CD14-positive monocyte (primary cell): ENCODE measurements at regions of chr19 and their contacts with region 1.

Region 1: DNA sequence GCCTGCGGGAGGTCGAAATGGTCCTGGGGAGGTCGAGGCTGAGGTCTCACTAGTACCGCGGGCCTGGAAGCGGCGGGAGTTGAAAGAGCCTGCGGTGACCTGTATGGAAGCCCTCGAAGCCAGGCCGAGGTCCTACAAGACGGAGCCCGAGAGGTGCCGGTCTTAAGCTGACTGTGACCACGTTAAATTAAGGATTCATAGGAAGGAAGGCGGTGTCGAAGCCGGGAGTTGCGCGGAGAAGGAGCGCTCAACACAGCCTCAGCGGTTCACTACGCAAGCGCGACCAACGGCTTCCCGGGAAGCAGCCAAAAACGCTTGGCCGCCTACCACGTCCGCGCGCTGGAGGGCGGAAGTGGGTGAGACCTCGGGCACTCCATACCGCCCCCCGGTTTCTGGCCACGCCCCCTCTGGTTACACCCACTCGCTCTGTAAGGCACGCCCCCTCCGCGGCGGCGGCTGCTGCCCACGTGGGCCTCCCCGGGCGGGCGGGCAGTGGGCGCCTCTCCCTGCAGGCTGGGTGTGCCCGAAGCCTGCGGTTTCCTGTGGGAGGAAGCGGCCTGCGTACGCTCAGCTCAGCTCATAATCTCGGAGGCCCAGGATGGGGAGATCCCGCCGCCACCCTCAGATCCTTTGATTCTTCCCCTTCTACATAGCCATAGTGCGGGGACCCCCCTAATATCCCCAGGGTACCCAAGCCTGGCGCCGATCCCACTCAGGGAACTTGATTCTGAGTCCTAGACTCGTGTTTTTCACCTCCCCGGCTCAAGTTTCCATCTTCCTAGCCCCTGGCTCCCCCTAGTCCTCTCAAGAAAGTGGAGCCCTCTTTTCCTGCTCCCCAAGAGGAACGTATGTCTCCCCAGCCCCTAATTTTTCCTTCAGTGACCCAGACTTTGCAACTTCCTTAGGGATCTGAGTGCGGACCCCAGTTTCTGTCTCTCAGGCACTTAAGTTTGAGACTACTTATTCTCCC is 3.4 kb upstream of the EMP3 start:
- DNase-seq: peak; percentile 98 to 99 (median 99)
- H3K4me3 ChIP-seq: peak overlapping the region; percentile 59 to 89 (median 75)
- H3K4me3 Mint-ChIP-seq: peak overlapping the region; percentile 89 to 93
- H3K27ac ChIP-seq: peak overlapping the region; percentile 94 to 99
- H3K27ac Mint-ChIP-seq: peak overlapping the region; percentile 99 to 100 (median 99)
- H3K4me1 ChIP-seq: peaks cover 53 to 60% of the 10 kb centered on the region in 2 donors
- H3K4me1 Mint-ChIP-seq: peaks cover 53% of the 10 kb centered on the region
- H3K27me3 ChIP-seq: no peaks in the 10 kb centered on the region
- H3K27me3 Mint-ChIP-seq: peaks cover 0 to 3% (median 2%) of the 10 kb centered on the region in 3 donors
- CTCF ChIP-seq: no peak

Region 2: GRCh38 chr19:48255376-48256303 is 66.3 kb before region 1 on chr19 and contains the start of gene CARD8:
- intact Hi-C with region 1: loop called in 1 of 2 experiments (anchors 5 kb)
- DNase-seq: peak; percentile 89 to 93 (median 90)
- H3K4me3 ChIP-seq: peak within 1 kb of the TSS; percentile 52 to 100 (median 93)
- H3K4me3 Mint-ChIP-seq: peak within 1 kb of the TSS; percentile 90 to 95
- H3K27ac ChIP-seq: peak within 1 kb of the TSS; percentile 86 to 99
- H3K27ac Mint-ChIP-seq: peak within 1 kb of the TSS; percentile 99 to 100 (median 100)
- H3K4me1 ChIP-seq: peaks cover 46 to 60% of the 10 kb centered on the region in 2 donors
- H3K4me1 Mint-ChIP-seq: peaks cover 64% of the 10 kb centered on the region
- H3K27me3 ChIP-seq: no peaks in the 10 kb centered on the region
- H3K27me3 Mint-ChIP-seq: peaks cover 0 to 3% (median 0%) of the 10 kb centered on the region in 3 donors
- CTCF ChIP-seq: no peak
- polyA plus RNA-seq, gene CARD8: 76.4 to 122 (median 90.9) TPM

Region 3: DNA sequence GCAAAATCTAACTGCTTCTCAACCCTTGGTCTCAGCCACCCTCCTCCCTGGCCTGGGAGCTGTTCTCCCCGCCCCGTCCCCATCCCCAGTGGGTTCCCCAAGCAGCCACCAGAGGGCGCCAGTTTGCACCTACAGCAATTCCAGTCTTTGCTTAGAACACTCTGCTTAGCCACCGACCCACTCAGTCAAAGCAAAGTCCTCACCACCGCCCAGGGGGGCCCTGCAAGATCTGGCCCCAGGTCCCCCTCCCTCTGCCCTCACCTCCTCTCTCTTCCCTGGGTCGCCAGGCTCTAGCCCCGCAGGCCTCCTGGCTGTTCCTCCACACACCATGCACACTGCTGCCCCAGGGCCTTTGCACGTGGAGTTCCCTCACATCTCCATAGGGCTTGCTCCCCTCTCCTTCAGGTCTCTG is 29.4 kb after region 1 on chr19:
- intact Hi-C with region 1: loop called in 1 of 2 experiments (anchors 5 kb)
- DNase-seq: peak; percentile 60 to 69 (median 60)
- H3K4me3 ChIP-seq: no peak overlapping the region
- H3K4me3 Mint-ChIP-seq: no peak overlapping the region
- H3K27ac ChIP-seq: no peak overlapping the region
- H3K27ac Mint-ChIP-seq: peak overlapping the region in 2 of 7 donors; percentile 26 to 71
- H3K4me1 ChIP-seq: no peaks in the 10 kb centered on the region
- H3K4me1 Mint-ChIP-seq: no peaks in the 10 kb centered on the region
- H3K27me3 ChIP-seq: no peaks in the 10 kb centered on the region
- H3K27me3 Mint-ChIP-seq: peaks cover 0 to 3% (median 0%) of the 10 kb centered on the region in 3 donors
- CTCF ChIP-seq: peak; percentile 83

Region 4: DNA sequence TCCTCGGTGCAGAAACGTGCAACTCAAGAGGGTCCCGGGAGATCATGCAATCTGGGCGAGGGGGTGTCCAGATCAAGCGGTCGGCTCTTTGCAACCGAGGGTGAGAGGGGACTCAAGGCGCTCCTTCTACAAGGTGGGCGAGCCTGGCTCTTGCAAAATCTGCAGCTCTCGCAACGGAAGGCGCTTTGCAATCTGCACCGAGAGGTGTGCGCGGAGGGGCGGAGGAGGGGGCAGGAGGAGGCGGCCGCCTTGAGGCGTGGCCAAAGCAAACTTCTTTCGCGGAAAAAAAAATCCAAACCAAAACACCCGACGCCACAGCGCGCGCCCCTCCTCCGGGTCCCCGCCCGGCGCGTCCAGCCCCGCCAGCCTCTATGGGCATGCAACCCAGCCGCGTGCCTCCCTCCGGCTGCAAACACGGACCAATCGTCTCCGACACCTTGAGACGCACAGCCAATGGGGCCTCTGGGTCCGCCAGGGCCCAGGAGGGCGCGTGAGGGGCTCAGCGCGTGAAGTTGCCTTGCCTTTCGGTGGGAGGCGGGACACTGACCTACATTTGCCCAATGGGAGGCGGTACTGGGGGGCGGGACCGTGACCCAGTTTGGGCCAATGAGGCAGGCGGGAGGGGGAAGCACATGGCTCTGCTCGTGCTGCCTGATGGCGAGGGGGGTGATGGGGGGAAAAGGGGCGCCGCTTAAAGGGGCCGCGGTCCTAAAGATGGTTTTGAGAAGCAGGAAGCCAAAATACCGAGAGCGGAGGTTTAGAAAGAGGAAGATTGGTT is 315.5 kb after region 1 on chr19 and contains the start of gene DBP:
- intact Hi-C with region 1: loop called in 1 of 2 experiments (anchors 10 kb)
- DNase-seq: peak; percentile 97 to 99 (median 98)
- H3K4me3 ChIP-seq: peak within 1 kb of the TSS; percentile 70 to 86 (median 84)
- H3K4me3 Mint-ChIP-seq: peak within 1 kb of the TSS; percentile 98 to 99
- H3K27ac ChIP-seq: peak within 1 kb of the TSS; percentile 95 to 96
- H3K27ac Mint-ChIP-seq: peak within 1 kb of the TSS; percentile 96 to 99 (median 99)
- H3K4me1 ChIP-seq: peaks cover 48 to 74% of the 10 kb centered on the region in 2 donors
- H3K4me1 Mint-ChIP-seq: peaks cover 51% of the 10 kb centered on the region
- H3K27me3 ChIP-seq: no peaks in the 10 kb centered on the region
- H3K27me3 Mint-ChIP-seq: peaks cover 2 to 9% (median 9%) of the 10 kb centered on the region in 3 donors
- CTCF ChIP-seq: no peak
- polyA plus RNA-seq, gene DBP: 12.8 to 22.3 (median 17.5) TPM

Region 5: DNA sequence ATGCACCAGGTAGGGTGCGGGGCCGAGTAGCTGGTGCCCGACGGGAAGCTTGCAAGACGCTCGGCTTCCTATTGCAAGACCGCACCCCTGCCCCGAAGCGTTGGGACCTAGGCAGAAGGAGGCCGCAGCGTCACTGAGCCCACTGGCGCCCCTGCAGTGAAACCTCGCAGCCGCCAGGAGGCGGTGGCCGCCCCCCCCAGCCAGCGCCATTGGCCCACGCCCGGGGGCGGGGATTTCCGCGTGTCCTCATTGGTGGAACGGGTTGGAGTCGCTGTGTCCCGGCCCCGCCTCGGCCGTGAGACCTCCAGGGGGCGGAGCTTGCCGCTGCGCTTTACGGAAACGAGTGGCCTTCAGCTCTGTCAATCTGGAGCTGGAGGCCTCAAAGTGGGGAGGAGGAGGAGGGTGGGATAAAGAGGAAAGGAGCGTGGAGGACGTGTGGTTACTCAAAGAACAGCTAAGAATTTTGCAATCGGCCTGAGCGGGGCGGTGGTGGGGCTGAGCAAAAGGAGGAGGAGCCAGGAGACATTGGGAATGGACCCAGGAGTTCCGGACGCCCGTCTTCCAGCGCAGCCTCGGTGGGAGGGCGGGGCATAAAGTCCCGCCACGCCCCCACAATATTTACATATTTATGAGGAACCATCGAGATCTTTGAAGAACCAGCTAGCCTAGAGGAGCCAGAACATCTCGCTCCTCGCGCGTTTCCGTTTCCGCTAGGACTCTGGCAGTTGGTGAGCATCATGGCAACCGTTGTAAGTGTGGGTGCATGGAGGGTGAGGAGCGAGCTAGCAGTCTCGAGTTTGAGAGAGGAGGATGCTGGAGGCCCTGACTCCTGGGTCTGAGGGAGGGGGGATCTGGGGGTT is 671.5 kb after region 1 on chr19 and contains the starts of genes GYS1 and RUVBL2:
- intact Hi-C with region 1: loop called in 1 of 2 experiments (anchors 10 kb)
- DNase-seq: peak; percentile 98 to 100 (median 100)
- H3K4me3 ChIP-seq: peak within 1 kb of the TSS; percentile 78 to 98 (median 93)
- H3K4me3 Mint-ChIP-seq: peak within 1 kb of the TSS; percentile 92 to 94
- H3K27ac ChIP-seq: peak within 1 kb of the TSS; percentile 86 to 94
- H3K27ac Mint-ChIP-seq: peak within 1 kb of the TSS; percentile 91 to 99 (median 97)
- H3K4me1 ChIP-seq: peaks cover 25 to 40% of the 10 kb centered on the region in 2 donors
- H3K4me1 Mint-ChIP-seq: peaks cover 26% of the 10 kb centered on the region
- H3K27me3 ChIP-seq: no peaks in the 10 kb centered on the region
- H3K27me3 Mint-ChIP-seq: peaks cover 0 to 3% (median 0%) of the 10 kb centered on the region in 3 donors
- CTCF ChIP-seq: peak; percentile 99
- polyA plus RNA-seq, gene GYS1: 13.3 to 26.0 (median 21.3) TPM
- polyA plus RNA-seq, gene RUVBL2: 40.1 to 44.4 (median 41.9) TPM